PC-9 (cell line): ENCODE measurements at regions of chr16 and their contacts with region 1.

Region 1: DNA sequence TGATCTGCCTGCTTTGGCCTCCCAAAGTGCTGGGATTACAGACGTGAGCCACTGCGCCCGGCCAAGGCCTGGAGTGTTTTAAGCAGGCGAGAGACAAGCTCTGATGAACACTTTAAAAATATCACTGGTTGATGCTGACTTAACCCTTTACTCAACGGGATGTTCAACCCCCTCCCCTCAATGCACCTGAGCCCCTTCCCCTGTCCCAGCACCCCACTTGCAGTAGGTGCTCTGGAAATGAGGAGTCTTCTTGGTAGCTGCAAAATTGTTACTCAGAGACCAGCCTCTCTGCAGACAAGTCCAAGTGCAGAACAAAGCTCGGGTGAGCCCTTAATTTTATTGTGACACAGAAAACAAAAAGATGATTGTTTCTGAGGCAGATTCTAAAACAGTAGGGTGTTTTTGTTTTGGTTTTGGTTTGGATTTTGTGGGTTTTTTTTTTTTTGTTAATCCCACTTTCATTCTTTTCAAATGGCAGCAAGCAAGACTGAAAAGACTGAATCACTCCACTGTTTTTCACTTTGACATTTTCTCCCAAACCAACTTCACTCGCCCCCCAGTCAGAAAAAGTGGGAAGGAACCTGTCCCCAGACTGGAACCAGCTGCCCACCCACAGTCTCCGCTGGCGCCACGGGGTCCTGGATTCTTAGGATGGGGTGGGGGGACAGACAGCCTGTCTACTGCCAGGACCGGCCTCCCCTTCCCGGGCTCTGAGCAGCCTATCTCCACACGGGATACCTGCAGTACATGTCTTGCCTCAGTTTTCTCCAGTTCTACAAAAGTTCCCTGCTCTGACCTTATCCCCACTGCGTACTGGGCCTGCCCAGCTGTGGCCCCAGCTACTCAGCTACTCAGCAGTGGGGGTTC is 5.2 kb upstream of the PLLP start:
- DNase-seq: no peak
- H3K4me3 ChIP-seq: no peak overlapping the region
- H3K27ac ChIP-seq: no peak overlapping the region
- H3K4me1 ChIP-seq: peaks cover 26% of the 10 kb centered on the region
- H3K27me3 ChIP-seq: no peaks in the 10 kb centered on the region
- CTCF ChIP-seq: no peak

Region 2: GRCh38 chr16:57277586-57277985 is 12.0 kb before region 1 on chr16:
- CTCF ChIA-PET with region 1: interaction called, 3 read pairs
- POLR2A ChIA-PET with region 1: interaction called, 3 read pairs
- intact Hi-C with region 1: loop called (anchors 1 kb)
- DNase-seq: peak; percentile 92 to 97
- H3K4me3 ChIP-seq: no peak overlapping the region
- H3K27ac ChIP-seq: peak overlapping the region; percentile 39; the same call in 1 of the 2 replicates
- H3K4me1 ChIP-seq: peaks cover 49% of the 10 kb centered on the region
- H3K27me3 ChIP-seq: no peaks in the 10 kb centered on the region
- CTCF ChIP-seq: no peak